Activated CD4-positive, alpha-beta memory T cell treated with anti-CD3 and anti-CD28 coated beads, Interleukin-2, amount 10 ng/mL, durations not matched to agents 7 days and 5 days (primary cell): ENCODE measurements at regions of chr22 and their contacts with region 1.

Region 1: DNA sequence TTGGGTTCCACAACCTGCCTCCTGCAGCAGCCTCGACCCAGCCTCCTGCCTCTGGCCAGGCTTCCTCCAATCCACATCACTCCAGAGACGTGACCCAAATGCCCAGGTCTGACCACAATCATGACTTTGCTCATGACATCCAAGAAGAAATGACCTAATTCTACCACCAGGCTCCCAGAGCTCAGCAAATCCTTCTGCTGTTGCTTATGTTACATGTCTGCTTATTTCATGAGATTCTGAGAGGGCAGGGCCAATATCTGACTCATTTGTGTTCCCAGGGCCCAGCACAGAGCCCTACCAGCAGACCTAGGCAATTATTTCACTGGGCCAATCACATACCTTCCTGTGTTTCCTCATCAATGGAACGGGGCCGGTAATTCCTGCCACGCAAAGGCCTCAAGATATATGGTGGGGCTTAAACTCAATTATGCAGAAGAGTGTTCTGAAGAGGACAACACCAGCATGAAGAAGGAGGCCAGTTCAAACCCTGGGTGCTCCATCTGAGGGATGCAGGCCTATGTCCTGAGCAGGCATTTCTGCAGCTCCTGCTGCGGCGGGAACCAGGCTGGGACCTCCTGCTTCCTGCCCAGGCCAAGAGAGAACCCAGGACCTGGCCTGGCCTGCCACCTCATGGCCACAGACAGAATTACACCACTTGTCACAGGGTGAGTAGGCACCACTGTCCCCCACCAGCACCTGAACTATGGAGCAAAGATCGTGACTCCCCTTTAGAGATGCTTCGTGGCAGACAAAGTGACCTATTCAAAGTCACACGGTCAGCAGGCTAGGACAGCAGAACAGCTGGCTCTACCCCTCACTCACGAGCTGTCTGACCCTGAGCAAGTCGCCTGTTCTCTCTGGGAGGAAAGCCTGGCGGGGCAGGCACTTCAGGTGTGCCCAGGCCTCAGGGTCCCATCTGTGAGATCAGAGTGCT is 5.9 kb downstream of the CENPM start:
- DNase-seq: peak; percentile 91
- H3K4me3 Mint-ChIP-seq: peak overlapping the region; percentile 76
- H3K27ac Mint-ChIP-seq: peak overlapping the region; percentile 99
- H3K4me1 Mint-ChIP-seq: peaks cover 67% of the 10 kb centered on the region
- H3K27me3 Mint-ChIP-seq: no peaks in the 10 kb centered on the region

Region 2: GRCh38 chr22:41688365-41689211 is 252.5 kb before region 1 on chr22 and contains the start of gene SNU13:
- CTCF ChIA-PET with region 1: interaction called, 3 read pairs
- POLR2A ChIA-PET with region 1: interaction called, 26 read pairs
- DNase-seq: peak; percentile 95
- H3K4me3 Mint-ChIP-seq: peak within 1 kb of the TSS; percentile 95
- H3K27ac Mint-ChIP-seq: peak within 1 kb of the TSS; percentile 92
- H3K4me1 Mint-ChIP-seq: peaks cover 40% of the 10 kb centered on the region
- H3K27me3 Mint-ChIP-seq: no peaks in the 10 kb centered on the region
- total RNA-seq, gene SNU13: 166 to 176 TPM

Region 3: DNA sequence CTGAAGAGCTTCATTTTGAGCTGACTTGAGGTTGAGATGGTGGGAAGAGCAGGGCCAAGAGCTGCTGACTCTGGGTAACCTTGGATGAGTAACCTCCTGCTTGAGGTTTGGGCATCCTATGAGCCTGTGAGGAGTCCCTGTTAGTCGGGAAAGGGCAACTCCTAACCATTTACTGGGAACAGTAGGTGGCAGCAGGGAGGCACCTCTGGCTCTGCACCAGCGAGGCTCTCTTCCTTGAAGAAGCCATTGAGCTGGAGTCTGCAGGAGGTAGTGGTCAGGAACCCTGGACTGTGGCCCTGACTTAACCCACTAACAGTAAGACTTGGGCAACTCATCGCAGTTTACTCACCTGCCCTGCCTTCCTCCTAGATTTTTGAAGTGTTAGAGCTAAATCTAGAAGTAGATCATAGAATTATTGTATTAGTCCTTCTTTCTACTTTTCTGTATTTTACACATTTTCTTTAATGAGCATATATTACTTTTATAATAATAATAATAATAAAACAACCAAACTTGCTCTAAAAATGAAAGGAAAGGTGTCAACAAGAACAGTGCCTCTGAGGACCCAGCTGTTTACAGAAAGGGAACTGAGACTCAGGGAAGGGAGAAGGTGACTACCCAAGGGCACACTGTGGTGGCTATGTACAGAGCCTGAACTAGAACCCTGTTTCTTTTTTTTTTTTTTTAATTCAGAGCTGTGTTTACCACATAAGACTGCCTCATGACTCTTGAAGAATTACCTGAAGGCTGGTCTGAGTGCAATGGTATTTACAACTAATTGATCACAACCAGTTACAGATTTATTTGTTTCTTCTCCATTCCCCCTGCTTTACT is 194.3 kb before region 1 on chr22:
- CTCF ChIA-PET with region 1: interaction called, 13 read pairs
- POLR2A ChIA-PET with region 1: interaction called, 5 read pairs
- DNase-seq: peak; percentile 58
- H3K4me3 Mint-ChIP-seq: no peak overlapping the region
- H3K27ac Mint-ChIP-seq: no peak overlapping the region
- H3K4me1 Mint-ChIP-seq: peaks cover 11% of the 10 kb centered on the region
- H3K27me3 Mint-ChIP-seq: peaks cover 18% of the 10 kb centered on the region

Region 4: GRCh38 chr22:41800348-41801146 is 140.6 kb before region 1 on chr22 and contains the start of gene CCDC134:
- CTCF ChIA-PET with region 1: interaction called, 7 read pairs
- POLR2A ChIA-PET with region 1: interaction called, 29 read pairs
- DNase-seq: peak; percentile 93
- H3K4me3 Mint-ChIP-seq: peak within 1 kb of the TSS; percentile 91
- H3K27ac Mint-ChIP-seq: peak within 1 kb of the TSS; percentile 90
- H3K4me1 Mint-ChIP-seq: peaks cover 44% of the 10 kb centered on the region
- H3K27me3 Mint-ChIP-seq: no peaks in the 10 kb centered on the region
- total RNA-seq, gene CCDC134: 17.9 to 20.3 TPM

Region 5: DNA sequence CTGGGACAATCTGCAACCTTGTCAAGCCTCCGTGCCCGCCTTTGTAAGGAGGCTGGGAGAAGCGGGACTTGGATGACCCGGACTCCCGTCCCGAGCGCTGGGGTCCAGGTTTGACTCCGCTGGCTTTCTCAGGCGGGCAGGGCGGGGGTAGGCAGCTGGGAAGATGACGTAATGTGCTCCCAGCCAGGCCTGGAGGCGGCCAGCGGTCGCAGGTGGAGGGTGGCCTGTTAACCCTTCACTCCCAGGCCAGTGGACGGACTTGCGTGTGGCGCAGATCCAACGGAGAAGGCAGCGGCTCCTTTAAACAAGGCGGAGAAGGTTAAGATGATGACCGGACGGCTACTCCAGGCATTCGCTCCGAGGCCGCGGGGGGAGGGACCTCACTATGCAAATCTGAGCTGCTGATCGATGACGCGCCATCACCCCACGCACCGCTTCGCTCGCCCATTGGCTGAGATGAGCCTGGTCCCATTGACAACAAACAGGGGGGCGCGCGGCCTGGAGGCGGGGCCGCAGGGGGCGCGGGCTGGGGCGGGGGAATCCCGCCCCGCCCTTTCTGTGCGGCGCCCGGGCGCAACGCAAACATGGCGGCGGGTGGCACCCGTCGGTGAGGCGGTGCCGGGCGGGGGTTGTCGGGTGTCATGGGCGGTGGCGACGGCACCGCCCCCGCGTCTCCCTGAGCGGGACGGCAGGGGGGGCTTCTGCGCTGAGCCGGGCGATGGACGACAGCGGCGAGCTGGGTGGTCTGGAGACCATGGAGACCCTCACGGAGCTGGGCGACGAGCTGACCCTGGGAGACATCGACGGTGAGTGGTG is 108.3 kb before region 1 on chr22 and contains the start of gene SREBF2:
- CTCF ChIA-PET with region 1: interaction called, 7 read pairs
- POLR2A ChIA-PET with region 1: interaction called, 39 read pairs
- DNase-seq: peak; percentile 100
- H3K4me3 Mint-ChIP-seq: peak within 1 kb of the TSS; percentile 92
- H3K27ac Mint-ChIP-seq: peak within 1 kb of the TSS; percentile 96
- H3K4me1 Mint-ChIP-seq: peaks cover 50% of the 10 kb centered on the region
- H3K27me3 Mint-ChIP-seq: no peaks in the 10 kb centered on the region
- total RNA-seq, gene SREBF2: 150 to 157 TPM

Region 6: DNA sequence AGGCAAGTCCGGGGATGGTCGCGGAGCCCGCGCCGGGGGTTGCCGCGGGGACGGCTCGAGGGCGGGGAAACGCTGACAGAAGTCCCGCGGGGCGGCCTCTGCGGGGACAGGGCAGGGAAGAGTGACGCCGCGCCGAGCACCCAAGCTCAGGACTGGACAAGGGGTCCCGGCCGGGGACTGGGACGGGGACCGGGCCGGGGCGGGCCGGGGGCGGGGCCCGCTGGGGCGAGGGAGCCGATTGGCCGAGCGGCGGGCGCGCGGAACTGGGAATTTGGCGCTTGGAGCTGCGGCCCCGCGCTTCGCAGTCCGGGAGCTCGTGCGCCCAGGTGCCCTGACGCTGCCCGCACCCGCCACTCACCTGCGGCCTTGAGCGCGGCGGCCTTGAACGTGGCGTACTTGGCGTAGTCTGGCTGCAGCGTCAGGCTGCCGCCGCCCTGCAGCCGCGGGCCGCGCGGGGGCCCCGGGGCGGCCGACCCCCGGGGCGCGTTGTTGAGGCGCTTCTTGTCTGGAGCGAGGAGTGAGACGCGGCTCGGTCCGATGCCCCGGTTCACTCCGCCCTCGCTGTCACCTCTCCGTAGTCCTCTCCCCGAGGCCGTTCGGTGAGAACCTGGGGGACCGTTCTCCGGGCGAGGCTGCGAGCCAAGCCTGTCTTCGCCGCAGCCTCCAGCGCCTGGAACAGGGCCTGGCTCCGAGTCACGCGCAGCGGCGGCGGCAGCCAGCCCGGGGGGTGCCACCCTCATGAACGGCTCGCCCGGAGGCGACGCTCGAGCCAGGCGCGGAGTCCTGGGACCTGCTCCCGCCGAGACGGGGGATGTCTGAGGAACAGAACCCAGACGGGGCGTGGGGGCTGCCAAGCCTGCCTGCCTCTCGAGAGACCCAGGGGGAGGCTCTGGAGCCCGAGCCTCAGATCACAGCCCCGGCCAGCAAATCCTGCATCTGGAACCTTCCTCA is 30.8 kb before region 1 on chr22:
- CTCF ChIA-PET with region 1: interaction called, 9 read pairs
- POLR2A ChIA-PET with region 1: interaction called, 17 read pairs
- DNase-seq: peak; percentile 35
- H3K4me3 Mint-ChIP-seq: no peak overlapping the region
- H3K27ac Mint-ChIP-seq: no peak overlapping the region
- H3K4me1 Mint-ChIP-seq: peaks cover 37% of the 10 kb centered on the region
- H3K27me3 Mint-ChIP-seq: peaks cover 38% of the 10 kb centered on the region

Region 7: GRCh38 chr22:42090596-42091454 is 149.7 kb after region 1 on chr22 and contains the start of gene NDUFA6:
- CTCF ChIA-PET with region 1: interaction called, 9 read pairs
- POLR2A ChIA-PET with region 1: interaction called, 38 read pairs
- DNase-seq: peak; percentile 99
- H3K4me3 Mint-ChIP-seq: peak within 1 kb of the TSS; percentile 99
- H3K27ac Mint-ChIP-seq: peak within 1 kb of the TSS; percentile 99
- H3K4me1 Mint-ChIP-seq: peaks cover 31% of the 10 kb centered on the region
- H3K27me3 Mint-ChIP-seq: no peaks in the 10 kb centered on the region
- total RNA-seq, gene NDUFA6: 94.8 to 97.1 TPM

Region 8: GRCh38 chr22:42188808-42189447 is 247.8 kb after region 1 on chr22:
- CTCF ChIA-PET with region 1: no interaction called
- POLR2A ChIA-PET with region 1: no interaction called
- DNase-seq: no peak
- H3K4me3 Mint-ChIP-seq: no peak overlapping the region
- H3K27ac Mint-ChIP-seq: no peak overlapping the region
- H3K4me1 Mint-ChIP-seq: peaks cover 61% of the 10 kb centered on the region
- H3K27me3 Mint-ChIP-seq: no peaks in the 10 kb centered on the region